ENCODE measurements at regions of chr2 and their contacts with region 1.

Region 1: DNA sequence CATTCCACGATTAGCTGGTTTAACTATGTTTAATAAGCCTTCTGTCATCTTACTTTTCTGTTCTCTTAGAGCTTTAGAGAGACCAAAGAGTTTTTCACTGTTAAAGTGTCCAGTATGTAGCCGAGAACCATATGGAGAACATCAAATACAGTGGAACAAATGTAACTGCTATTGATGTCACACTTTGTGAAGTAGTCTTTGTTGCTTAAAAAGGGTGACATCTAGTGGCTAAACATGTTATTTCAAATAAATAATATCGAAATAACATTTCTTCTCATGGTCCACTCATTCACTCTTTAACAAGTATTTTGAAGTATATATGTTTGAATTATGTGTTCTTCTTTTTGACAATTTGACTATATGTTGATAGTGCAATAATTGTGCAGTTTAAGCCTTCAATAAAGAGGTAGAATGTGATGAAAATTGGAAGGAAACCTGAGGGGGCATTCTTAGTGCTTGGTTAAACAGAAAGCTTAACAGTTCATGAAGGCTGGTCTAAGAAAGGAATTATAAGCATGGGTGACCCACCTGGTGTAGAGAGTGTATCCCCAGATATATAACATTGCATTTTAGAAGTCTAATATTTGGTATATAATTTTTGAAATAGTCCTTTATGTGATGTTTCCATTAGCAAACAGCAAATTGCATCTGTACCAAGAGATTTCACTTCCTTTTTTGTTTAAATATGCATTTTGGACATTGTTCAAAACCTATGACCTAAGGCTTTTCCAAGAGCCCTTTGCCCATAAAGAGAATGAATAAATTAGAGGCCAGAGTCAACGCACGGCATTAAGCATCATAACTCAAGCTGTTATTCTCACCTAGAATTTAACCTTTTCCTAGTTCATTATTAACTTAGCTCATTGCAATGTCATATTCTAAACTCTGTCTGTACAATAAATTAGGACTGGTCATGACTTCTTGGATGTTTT is 112.1 kb downstream of the KYNU start:
- DNase-seq: no peak
- H3K4me3 ChIP-seq: no peak overlapping the region
- H3K27ac ChIP-seq: no peak overlapping the region
- H3K4me1 ChIP-seq: no peaks in the 10 kb centered on the region
- H3K27me3 ChIP-seq: no peaks in the 10 kb centered on the region
- CTCF ChIP-seq: peak; percentile 41 to 53 (median 47)
- POLR2A ChIP-seq: no peak

Region 2: GRCh38 chr2:142796161-142796560 is 193.4 kb before region 1 on chr2:
- intact Hi-C with region 1: loop called (anchors 10 kb)
- DNase-seq: no peak
- H3K4me3 ChIP-seq: no peak overlapping the region
- H3K27ac ChIP-seq: no peak overlapping the region
- H3K4me1 ChIP-seq: no peaks in the 10 kb centered on the region
- H3K27me3 ChIP-seq: no peaks in the 10 kb centered on the region
- CTCF ChIP-seq: peak in 1 of 4 experiments; percentile 13
- POLR2A ChIP-seq: no peak